ENCODE measurements at regions of chr10 and their contacts with region 1.

Region 1: DNA sequence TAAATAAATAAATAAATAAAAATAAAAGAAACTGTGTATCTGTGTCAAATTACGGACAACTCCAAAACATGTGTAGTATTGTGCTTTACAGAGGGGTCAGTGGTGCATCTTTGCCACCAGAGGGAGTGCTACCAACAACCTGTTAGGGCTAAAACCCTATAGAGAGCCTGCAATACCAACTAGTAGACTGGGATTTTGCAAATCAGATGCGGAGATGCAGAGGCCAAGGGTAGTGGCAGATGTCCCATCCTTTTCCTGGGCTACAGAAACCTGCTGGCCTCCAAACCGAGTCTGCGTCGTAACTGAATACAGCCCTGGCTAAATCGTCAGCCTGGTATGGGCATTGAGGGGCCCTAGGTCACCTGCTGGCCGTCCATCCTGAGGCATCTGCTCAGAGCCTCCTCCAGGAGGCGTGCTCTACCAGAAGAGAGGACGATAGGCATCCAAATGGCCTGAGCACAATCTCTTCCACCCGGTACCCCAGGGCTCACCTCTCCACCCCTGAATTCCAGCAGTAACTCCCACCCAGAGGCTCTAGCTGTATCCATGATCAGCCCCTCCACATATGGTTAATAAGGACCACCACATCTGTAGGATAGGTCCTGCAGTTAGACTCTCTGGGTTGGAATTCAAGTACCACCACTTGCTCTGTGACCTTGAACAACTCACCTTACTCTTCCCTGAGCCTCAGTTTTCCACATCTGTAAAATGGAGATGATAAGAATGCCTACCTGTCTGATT is 6.2 kb upstream of the RRP12 start:
- DNase-seq: peak; percentile 87 to 93
- ATAC-seq: peak; percentile 99 to 100
- H3K4me3 ChIP-seq: peak overlapping the region; percentile 33; the same call in 2 of the 3 replicates
- H3K27ac ChIP-seq: peak overlapping the region; percentile 29 to 71; a peak in 4 of 6 replicates
- H3K4me1 ChIP-seq: 0 out of 3 replicates have a peak, but pooled peaks cover 4% of the 10 kb centered on the region
- CTCF ChIP-seq: peak; percentile 95
- EP300 ChIP-seq: no peak
- POLR2A ChIP-seq: no peak
- RAD21 ChIP-seq: peak; percentile 55 to 59

Region 2: GRCh38 chr10:97425964-97426775 is 18.8 kb after region 1 on chr10 and contains the start of gene PGAM1:
- CTCF ChIA-PET with region 1: interaction called, 15 read pairs
- POLR2A ChIA-PET with region 1: no interaction called
- DNase-seq: peak; percentile 96 to 97
- ATAC-seq: peak; percentile 92 to 94
- H3K4me3 ChIP-seq: peak within 1 kb of the TSS; percentile 73
- H3K27ac ChIP-seq: peak within 1 kb of the TSS; percentile 88 to 91
- H3K4me1 ChIP-seq: peaks cover 17% of the 10 kb centered on the region; the same call in 2 of the 3 replicates
- CTCF ChIP-seq: peak; percentile 62
- EP300 ChIP-seq: no peak
- POLR2A ChIP-seq: peak; percentile 48
- RAD21 ChIP-seq: no peak
- polyA plus RNA-seq, gene PGAM1: 459 and 516 TPM in 2 replicates

Region 3: GRCh38 chr10:97434055-97434454 is 26.7 kb after region 1 on chr10:
- CTCF ChIA-PET with region 1: interaction called, 11 read pairs
- POLR2A ChIA-PET with region 1: no interaction called
- DNase-seq: no peak
- ATAC-seq: peak; percentile 68 to 85; a peak in 5 of 6 replicates
- H3K4me3 ChIP-seq: no peak overlapping the region
- H3K27ac ChIP-seq: no peak overlapping the region
- H3K4me1 ChIP-seq: no peaks in the 10 kb centered on the region
- CTCF ChIP-seq: no peak; the same call in 2 of the 3 replicates
- EP300 ChIP-seq: no peak
- POLR2A ChIP-seq: no peak
- RAD21 ChIP-seq: no peak

Region 4: GRCh38 chr10:97534746-97535367 is 127.5 kb after region 1 on chr10:
- CTCF ChIA-PET with region 1: interaction called, 10 read pairs
- POLR2A ChIA-PET with region 1: no interaction called
- DNase-seq: peak; percentile 61 to 67
- ATAC-seq: peak; percentile 77 to 87
- H3K4me3 ChIP-seq: no peak overlapping the region
- H3K27ac ChIP-seq: 0 out of 6 replicates have a peak overlapping the region, but pooled peaks of 1 of the 2 experiments have one; percentile 16
- H3K4me1 ChIP-seq: peaks cover 20% of the 10 kb centered on the region
- CTCF ChIP-seq: peak; percentile 59
- EP300 ChIP-seq: no peak
- POLR2A ChIP-seq: no peak
- RAD21 ChIP-seq: peak; percentile 52 to 74

Measured in A549 (cell line).